Sigmoid colon (tissue), 7 donors: ENCODE measurements at regions of chr12 and their contacts with region 1.

Region 1: DNA sequence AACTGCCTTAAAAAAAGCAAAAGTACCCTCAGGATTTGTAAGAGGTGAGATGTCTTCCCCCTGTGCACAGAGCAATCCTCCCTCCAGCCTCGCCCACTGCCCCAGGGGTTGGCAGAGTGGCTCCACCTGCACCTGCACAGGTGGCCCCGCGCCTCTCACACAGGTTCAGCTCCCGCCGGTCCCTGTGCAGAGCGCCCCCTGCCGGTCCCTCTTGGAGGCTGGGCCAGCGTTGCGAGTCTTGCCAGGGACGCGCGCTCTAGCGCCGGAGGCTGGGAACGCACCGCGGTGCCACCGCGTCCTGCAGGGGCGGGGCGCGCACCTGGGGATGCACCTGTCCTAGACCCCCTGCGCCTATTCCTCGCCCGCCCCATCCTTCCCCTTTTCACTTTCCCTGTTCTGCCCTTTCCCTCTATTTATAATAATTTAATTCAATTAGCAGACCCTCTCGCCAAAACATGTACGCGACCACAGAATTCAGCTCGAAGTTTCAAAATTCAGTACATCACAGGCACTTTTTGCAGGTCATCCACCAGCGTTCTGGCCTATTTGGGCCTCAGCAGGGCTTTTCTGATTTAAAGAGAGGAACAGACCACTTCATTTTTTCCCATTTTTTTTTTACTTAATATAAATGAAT is 618.6 kb downstream of the AACS start:
- DNase-seq: no peak
- H3K4me3 ChIP-seq: no peak overlapping the region
- H3K27ac ChIP-seq: no peak overlapping the region
- H3K4me1 ChIP-seq: peaks cover 0 to 29% (median 1%) of the 10 kb centered on the region in 4 donors
- H3K27me3 ChIP-seq: peaks cover 0 to 8% (median 0%) of the 10 kb centered on the region in 3 donors
- CTCF ChIP-seq: no peak
- EP300 ChIP-seq: no peak
- POLR2A ChIP-seq: no peak

Region 2: GRCh38 chr12:125861299-125862281 is 177.7 kb after region 1 on chr12:
- intact Hi-C with region 1: no loop called
- DNase-seq: peak; percentile 69
- H3K4me3 ChIP-seq: peak overlapping the region in 3 of 4 donors; percentile 25 to 41 (median 30)
- H3K27ac ChIP-seq: no peak overlapping the region
- H3K4me1 ChIP-seq: no peaks in the 10 kb centered on the region
- H3K27me3 ChIP-seq: peaks cover 0 to 6% (median 0%) of the 10 kb centered on the region in 3 donors
- CTCF ChIP-seq: no peak
- EP300 ChIP-seq: no peak
- POLR2A ChIP-seq: no peak

Region 3: DNA sequence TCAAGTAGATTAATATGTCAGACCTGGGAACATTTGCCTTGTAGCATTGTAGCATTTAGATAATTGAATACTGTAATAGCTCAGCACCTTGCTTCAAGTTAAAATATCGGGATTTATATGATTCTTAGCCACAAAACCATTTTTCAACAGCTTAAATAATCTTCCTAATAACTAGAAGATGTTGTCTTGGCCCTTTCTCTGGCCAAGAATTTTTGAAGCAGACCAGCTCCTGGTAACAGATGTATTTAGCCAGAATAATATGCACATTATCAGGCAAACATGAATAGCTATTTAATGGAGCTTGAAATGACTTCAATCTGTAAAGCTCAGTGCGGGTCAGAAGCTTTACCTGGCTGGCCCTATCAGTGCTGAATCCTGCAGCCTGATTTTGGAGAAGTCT is 294.4 kb after region 1 on chr12:
- intact Hi-C with region 1: loop called (anchors 10 kb)
- DNase-seq: no peak
- H3K4me3 ChIP-seq: no peak overlapping the region
- H3K27ac ChIP-seq: no peak overlapping the region
- H3K4me1 ChIP-seq: peaks cover 0 to 4% (median 2%) of the 10 kb centered on the region in 4 donors
- H3K27me3 ChIP-seq: no peaks in the 10 kb centered on the region
- CTCF ChIP-seq: no peak
- EP300 ChIP-seq: no peak
- POLR2A ChIP-seq: no peak

Region 4: GRCh38 chr12:126114441-126114840 is 430.6 kb after region 1 on chr12:
- intact Hi-C with region 1: loop called (anchors 5 kb)
- DNase-seq: no peak
- H3K4me3 ChIP-seq: no peak overlapping the region
- H3K27ac ChIP-seq: no peak overlapping the region
- H3K4me1 ChIP-seq: peaks cover 0 to 38% (median 8%) of the 10 kb centered on the region in 4 donors
- H3K27me3 ChIP-seq: no peaks in the 10 kb centered on the region
- CTCF ChIP-seq: no peak
- EP300 ChIP-seq: peak in 2 of 4 donors; percentile 56 to 85
- POLR2A ChIP-seq: no peak